ENCODE measurements at regions of chr17 and their contacts with region 1.

Region 1: GRCh38 chr17:47663912-47664625 is 14.3 kb downstream of the KPNB1 start:
- DNase-seq: peak; percentile 82
- ATAC-seq: peak; percentile 70
- H3K4me3 ChIP-seq: peak overlapping the region; percentile 25 to 53 (median 40)
- H3K4me3 Mint-ChIP-seq: peak overlapping the region; percentile 82
- H3K27ac ChIP-seq: peak overlapping the region; percentile 62 to 72
- H3K27ac Mint-ChIP-seq: peak overlapping the region; percentile 87
- H3K4me1 ChIP-seq: peaks cover 28 to 39% of the 10 kb centered on the region in 2 donors
- H3K4me1 Mint-ChIP-seq: peaks cover 30% of the 10 kb centered on the region
- H3K27me3 ChIP-seq: no peaks in the 10 kb centered on the region
- H3K27me3 Mint-ChIP-seq: no peaks in the 10 kb centered on the region
- CTCF ChIP-seq: peak; percentile 92

Region 2: DNA sequence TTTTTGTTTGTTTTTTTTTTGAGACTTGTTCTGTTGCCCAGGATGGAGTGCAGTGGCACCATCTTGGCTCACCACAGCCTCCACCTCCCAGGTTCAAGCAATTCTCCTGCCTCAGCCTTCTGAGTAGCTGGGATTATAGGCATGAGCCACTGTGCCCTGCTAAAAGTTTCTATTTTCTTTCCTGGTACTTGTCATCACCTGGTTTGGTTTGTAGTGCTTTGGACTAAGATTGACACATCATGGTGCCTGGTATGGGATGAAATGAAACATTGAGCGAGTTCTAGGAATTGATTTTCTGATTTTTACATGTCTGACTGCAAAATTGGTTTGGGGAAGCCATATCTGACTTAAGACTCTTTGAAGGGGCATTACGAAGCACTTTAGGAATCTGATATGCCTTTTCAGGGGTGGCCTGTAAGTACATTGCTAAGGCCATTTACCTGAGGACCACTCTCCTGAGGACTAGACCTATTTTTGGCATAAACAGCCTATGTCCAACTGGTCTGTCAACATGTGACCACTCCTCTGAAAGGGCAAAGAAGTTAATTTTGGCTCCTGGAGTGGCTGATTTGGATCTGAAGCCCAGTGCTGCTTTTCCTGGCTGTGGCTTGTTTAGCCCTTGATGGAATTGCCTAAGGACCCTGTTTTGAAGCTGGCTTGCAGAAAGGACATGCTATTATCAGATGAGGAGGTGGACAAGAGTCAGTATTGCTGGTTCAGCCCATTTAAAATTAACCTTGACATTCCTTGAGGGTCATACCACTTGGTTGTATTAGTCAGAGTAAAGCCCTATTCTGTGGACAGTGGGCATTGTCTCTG is 11.5 kb after region 1 on chr17:
- CTCF ChIA-PET with region 1: interaction called, 25 read pairs
- POLR2A ChIA-PET with region 1: no interaction called
- intact Hi-C with region 1: no loop called
- DNase-seq: no peak
- ATAC-seq: no peak
- H3K4me3 ChIP-seq: no peak overlapping the region
- H3K4me3 Mint-ChIP-seq: no peak overlapping the region
- H3K27ac ChIP-seq: no peak overlapping the region
- H3K27ac Mint-ChIP-seq: no peak overlapping the region
- H3K4me1 ChIP-seq: peaks cover 0 to under 1% of the 10 kb centered on the region in 2 donors
- H3K4me1 Mint-ChIP-seq: peaks cover 3% of the 10 kb centered on the region
- H3K27me3 ChIP-seq: no peaks in the 10 kb centered on the region
- H3K27me3 Mint-ChIP-seq: no peaks in the 10 kb centered on the region
- CTCF ChIP-seq: no peak

Region 3: GRCh38 chr17:47717261-47717697 is 53.2 kb after region 1 on chr17:
- CTCF ChIA-PET with region 1: interaction called, 10 read pairs
- POLR2A ChIA-PET with region 1: no interaction called
- intact Hi-C with region 1: no loop called
- DNase-seq: peak; percentile 45
- ATAC-seq: peak; percentile 18
- H3K4me3 ChIP-seq: no peak overlapping the region
- H3K4me3 Mint-ChIP-seq: peak overlapping the region; percentile 21
- H3K27ac ChIP-seq: no peak overlapping the region
- H3K27ac Mint-ChIP-seq: peak overlapping the region; percentile 16
- H3K4me1 ChIP-seq: peaks cover 85 to 98% of the 10 kb centered on the region in 2 donors
- H3K4me1 Mint-ChIP-seq: peaks cover 94% of the 10 kb centered on the region
- H3K27me3 ChIP-seq: peaks cover 0 to 14% (median 10%) of the 10 kb centered on the region in 4 experiments
- H3K27me3 Mint-ChIP-seq: peaks cover 9% of the 10 kb centered on the region
- CTCF ChIP-seq: no peak

Region 4: DNA sequence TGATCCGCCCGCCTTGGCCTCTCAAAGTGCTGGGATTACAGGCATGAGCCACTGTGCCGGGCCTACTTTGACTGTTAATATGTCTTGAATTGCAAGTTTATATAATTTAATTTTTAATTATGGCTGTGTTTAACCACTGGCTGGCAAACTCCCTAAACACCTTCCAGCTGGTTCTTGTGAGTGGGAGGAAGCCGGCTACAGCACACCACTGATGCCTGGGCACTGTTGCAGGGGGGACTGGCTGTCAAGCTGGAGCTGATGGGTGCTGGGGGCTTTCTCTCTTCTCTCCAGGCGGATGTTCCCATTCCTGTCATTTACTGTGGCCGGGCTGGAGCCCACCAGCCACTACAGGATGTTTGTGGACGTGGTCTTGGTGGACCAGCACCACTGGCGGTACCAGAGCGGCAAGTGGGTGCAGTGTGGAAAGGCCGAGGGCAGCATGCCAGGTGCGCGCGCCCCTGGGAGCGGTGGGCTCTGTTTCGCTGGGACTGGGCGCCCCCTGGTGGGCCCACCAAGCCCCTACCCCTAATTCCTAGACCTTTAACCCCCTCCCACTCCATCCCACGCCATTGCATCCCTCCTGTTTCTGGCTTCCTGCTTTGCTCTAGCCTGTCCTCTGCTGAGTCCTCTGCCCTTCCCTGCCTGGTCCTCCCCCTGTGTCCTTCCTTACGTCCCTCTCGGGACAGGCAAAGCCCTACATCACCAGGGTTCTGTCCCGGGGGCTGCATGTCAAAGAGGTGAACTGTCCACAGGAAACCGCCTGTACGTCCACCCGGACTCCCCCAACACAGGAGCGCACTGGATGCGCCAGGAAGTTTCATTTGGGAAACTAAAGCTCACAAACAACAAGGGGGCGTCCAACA is 78.5 kb after region 1 on chr17:
- CTCF ChIA-PET with region 1: interaction called, 41 read pairs
- POLR2A ChIA-PET with region 1: no interaction called
- intact Hi-C with region 1: loop called (anchors 1 kb)
- DNase-seq: peak; percentile 70
- ATAC-seq: peak; percentile 86
- H3K4me3 ChIP-seq: no peak overlapping the region
- H3K4me3 Mint-ChIP-seq: no peak overlapping the region
- H3K27ac ChIP-seq: no peak overlapping the region
- H3K27ac Mint-ChIP-seq: no peak overlapping the region
- H3K4me1 ChIP-seq: peaks cover 7 to 19% of the 10 kb centered on the region in 2 donors
- H3K4me1 Mint-ChIP-seq: peaks cover 22% of the 10 kb centered on the region
- H3K27me3 ChIP-seq: peaks cover 0 to 4% (median 0%) of the 10 kb centered on the region in 4 experiments
- H3K27me3 Mint-ChIP-seq: peaks cover 8% of the 10 kb centered on the region
- CTCF ChIP-seq: peak; percentile 67

Region 5: DNA sequence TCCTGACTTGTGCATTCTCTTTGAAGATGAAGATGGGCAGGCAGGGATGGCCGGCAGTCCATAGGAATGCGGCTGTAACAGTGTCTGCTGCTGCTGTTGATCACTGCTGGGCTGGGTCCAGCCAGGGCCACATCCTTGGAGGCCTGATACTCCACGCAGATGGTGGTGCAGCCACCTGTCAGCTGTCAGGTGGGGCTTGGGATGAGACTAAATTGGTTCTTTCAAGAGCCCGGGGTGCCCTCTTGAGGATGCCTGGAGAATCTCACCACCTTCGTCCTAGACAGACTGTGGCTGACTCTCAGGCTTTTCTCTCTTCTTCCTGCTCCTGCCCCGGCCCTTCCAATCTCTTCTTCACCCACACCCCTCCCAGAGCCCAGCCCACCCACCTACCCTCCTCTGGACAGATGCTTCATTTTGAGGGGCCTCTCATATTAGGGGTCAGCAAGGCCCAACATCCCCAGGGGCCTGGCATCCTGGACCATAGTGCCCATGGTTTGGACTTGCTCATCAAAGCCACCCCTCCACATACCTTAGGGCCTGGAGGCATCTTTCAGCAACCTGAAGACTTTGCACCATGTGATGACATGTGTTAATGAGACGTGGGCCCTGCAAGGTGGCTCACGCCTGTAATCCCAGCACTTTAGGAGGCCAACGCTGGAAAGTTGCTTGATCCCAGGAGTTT is 138.4 kb after region 1 on chr17:
- CTCF ChIA-PET with region 1: interaction called, 14 read pairs
- POLR2A ChIA-PET with region 1: interaction called, 5 read pairs
- intact Hi-C with region 1: loop called (anchors 1 kb)
- DNase-seq: peak; percentile 68
- ATAC-seq: peak; percentile 79
- H3K4me3 ChIP-seq: no peak overlapping the region
- H3K4me3 Mint-ChIP-seq: no peak overlapping the region
- H3K27ac ChIP-seq: no peak overlapping the region
- H3K27ac Mint-ChIP-seq: no peak overlapping the region
- H3K4me1 ChIP-seq: no peaks in the 10 kb centered on the region
- H3K4me1 Mint-ChIP-seq: peaks cover 1% of the 10 kb centered on the region
- H3K27me3 ChIP-seq: peaks cover 0 to 8% (median 0%) of the 10 kb centered on the region in 4 experiments
- H3K27me3 Mint-ChIP-seq: peaks cover 7% of the 10 kb centered on the region
- CTCF ChIP-seq: peak; percentile 71